Ascending aorta (tissue), 2 donors: ENCODE measurements at regions of chr14 and their contacts with region 1.

Region 1: DNA sequence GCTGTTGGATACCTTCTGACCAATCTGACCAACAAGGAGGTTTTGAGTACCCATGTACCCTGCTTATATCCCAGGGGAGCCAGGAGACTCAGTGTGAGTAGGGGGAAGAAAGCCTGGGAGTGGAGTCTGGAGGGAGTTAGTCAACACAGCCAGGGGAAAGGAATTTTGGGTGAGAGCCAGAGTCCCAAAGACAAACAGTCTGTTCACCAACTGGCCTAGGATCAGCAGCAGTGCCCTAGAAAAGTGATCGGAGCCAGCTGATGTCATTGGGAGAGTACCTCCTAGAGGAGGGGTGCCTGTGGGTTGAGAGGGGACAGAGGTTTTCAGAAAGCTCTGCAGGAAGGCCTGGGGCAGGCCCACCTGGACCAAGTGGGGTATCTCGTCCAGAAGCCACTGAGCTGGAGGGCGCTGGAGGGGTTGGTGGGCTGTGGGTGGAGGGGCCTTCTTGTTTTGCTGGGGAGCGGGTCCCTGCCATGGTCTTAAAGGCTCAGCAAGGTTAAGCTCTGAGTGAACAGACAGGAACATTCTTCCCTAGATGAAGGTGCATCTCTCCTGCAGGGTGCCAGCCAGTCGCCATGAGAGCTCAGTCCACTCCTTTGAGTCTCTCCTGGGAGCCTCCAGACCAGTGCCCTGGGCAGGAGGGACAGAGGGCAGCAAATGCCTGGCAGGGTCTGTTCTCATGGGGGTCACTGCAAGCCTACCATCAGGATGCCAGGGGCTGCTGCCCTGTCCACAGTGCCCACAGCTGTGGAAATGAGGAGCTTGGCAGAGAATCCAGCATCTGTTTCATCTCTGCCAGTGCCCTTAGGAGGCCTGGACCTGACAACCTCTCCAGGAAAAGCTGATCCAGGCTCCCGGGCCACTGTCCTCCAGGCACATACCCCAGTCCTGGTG is 63.6 kb downstream of the CHGA start:
- DNase-seq: peak in 1 of 2 donors; percentile 89
- H3K4me3 ChIP-seq: no peak overlapping the region
- H3K27ac ChIP-seq: peak overlapping the region; percentile 61 to 87
- H3K4me1 ChIP-seq: peaks cover 3 to 17% of the 10 kb centered on the region in 2 donors
- H3K27me3 ChIP-seq: no peaks in the 10 kb centered on the region
- CTCF ChIP-seq: no peak

Region 2: GRCh38 chr14:92362781-92363235 is 623.7 kb before region 1 on chr14:
- intact Hi-C with region 1: loop called (anchors 5 kb)
- DNase-seq: peak; percentile 41 to 86
- H3K4me3 ChIP-seq: no peak overlapping the region
- H3K27ac ChIP-seq: no peak overlapping the region
- H3K4me1 ChIP-seq: peaks cover 0 to 4% of the 10 kb centered on the region in 2 donors
- H3K27me3 ChIP-seq: no peaks in the 10 kb centered on the region
- CTCF ChIP-seq: no peak

Region 3: GRCh38 chr14:92897922-92898565 is 88.5 kb before region 1 on chr14:
- intact Hi-C with region 1: no loop called
- DNase-seq: no peak
- H3K4me3 ChIP-seq: no peak overlapping the region
- H3K27ac ChIP-seq: no peak overlapping the region
- H3K4me1 ChIP-seq: no peaks in the 10 kb centered on the region
- H3K27me3 ChIP-seq: no peaks in the 10 kb centered on the region
- CTCF ChIP-seq: no peak

Region 4: DNA sequence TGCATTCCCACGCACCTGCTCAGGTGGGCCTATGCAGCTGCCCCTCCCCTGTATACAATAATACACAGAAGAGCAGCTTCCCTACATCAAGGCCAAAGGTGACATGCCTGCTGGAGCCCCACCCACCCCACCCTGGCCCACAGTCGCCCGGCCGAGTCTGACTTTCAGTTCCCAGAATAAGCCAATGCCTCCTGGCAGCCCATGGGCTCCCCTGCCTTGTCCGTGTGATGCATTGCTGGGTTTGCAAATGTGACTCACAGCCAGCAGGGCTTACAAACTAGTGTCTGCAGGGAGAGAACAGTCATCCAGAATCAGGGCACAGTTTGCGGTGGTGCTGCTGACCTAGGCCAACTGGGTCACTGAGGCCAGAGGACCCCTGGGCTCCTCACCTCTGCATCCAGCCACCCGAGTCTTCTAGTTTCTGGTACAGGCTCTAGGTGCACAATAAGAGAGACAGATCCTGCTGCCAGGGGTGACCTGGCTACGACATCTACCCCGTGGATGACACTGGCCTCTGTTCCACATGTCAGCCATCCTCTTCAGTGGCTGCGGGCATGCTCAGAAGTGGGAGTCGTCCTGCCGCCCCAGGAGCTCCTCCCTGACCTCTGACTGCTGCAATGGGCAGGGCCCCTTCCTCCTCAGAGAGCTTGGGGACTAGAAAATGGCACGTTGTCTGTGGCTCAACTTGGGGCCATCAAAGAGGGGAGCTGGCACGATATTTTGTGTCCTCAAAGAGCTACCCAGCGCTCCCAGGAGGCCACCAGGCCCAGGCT is 20.9 kb after region 1 on chr14:
- intact Hi-C with region 1: loop called (anchors 2 kb)
- DNase-seq: peak; percentile 45 to 83
- H3K4me3 ChIP-seq: no peak overlapping the region
- H3K27ac ChIP-seq: peak overlapping the region; percentile 37 to 49
- H3K4me1 ChIP-seq: peaks cover 9 to 44% of the 10 kb centered on the region in 2 donors
- H3K27me3 ChIP-seq: no peaks in the 10 kb centered on the region
- CTCF ChIP-seq: no peak

Region 5: DNA sequence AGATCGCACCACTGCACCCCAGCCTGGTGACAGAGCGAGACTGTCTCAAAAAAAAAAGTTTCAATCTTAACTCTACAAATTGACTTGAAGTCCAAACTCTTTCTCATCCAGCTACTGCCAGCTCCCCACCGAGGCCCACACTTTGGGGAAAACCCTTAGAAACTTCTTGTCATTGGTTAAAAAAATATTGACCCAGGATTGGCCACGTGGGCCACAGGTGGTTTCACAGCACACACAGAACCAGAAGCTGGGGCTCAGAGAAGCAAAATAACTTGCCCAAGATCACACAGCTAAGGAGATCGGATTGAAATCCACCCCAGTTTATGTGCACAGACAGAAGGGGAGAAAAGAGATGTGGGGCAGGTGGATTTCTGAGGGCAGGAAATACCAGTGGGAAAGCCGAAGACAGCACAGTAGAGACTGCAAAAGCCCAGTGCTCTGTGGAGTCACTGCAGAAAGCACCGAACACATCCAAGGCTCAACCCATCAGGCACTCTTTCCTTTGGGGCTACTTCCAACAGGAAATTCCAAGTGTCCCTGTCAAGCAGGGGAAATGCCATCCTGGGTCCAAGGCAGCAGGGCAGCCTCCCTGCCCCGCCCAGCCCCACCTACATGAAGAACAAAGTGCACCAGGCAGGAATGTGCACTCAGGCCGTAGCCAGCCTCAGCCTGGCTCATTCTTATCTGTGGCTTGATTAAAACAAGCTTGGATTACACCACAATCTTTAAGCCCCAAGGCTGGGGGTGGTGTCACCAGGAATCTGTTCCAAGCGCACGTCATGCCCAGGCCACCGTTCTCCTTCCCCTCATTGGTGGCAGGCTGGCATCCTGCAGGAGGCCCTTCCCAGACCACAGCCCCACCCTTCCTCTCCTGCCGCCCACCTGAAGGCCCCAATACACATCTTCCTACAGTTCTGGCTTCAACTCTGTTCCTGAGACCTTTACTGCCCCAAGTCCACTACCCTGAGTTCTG is 56.8 kb after region 1 on chr14:
- intact Hi-C with region 1: loop called (anchors 5 kb)
- DNase-seq: peak in 1 of 2 donors; percentile 91
- H3K4me3 ChIP-seq: no peak overlapping the region
- H3K27ac ChIP-seq: peak overlapping the region; percentile 71 to 85
- H3K4me1 ChIP-seq: peaks cover 18 to 55% of the 10 kb centered on the region in 2 donors
- H3K27me3 ChIP-seq: no peaks in the 10 kb centered on the region
- CTCF ChIP-seq: no peak